ENCODE measurements at regions of chr1 and their contacts with region 1.

Region 1: DNA sequence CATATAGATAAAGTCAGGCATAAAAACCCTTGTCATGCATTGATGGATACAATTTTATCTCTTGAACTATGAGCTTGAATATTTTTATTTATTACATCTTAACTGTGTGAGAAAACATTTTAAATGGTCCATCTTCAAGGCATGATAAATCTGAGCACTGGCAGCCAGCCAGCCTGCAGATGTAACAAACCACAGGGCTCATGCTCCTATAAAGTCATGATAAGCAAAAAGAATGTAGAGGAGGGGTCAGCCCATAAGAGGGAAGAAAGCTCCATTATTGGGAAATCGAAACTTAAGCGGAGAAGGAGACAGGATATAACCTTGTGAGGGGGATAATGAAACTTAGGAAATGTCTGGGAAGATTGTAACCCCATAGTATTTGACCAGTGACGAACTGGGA is 839.0 kb downstream of the LRRIQ3 start:
- DNase-seq: no peak
- H3K4me3 ChIP-seq: no peak overlapping the region
- CTCF ChIP-seq: no peak
- POLR2A ChIP-seq: no peak

Region 2: GRCh38 chr1:74976491-74976890 is 1617.5 kb after region 1 on chr1:
- intact Hi-C with region 1: no loop called
- DNase-seq: no peak
- H3K4me3 ChIP-seq: no peak overlapping the region
- CTCF ChIP-seq: no peak
- POLR2A ChIP-seq: no peak

Region 3: DNA sequence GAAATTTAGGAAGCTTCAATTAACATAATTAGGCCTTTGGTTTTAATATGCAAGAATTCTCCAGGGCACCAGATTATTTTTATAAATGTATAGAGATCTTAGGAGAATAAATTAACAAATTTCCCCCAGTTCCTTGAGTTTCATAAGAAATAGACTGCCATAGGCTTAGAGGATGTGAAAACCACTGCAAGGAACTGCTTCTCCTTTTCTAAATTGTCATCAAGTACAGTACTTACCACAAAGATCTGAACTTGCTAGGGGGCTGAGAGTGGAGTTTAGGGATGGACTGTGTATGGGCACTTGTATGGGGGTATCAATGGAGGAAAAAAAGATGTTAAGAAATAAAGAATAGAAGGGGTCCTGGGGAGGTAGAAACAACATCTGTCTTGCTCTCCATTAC is 1806.3 kb after region 1 on chr1:
- intact Hi-C with region 1: loop called (anchors 5 kb)
- DNase-seq: no peak
- H3K4me3 ChIP-seq: no peak overlapping the region
- CTCF ChIP-seq: no peak
- POLR2A ChIP-seq: no peak